Left cardiac atrium (tissue), 4 donors: ENCODE measurements at regions of chr20 and their contacts with region 1.

Region 1: DNA sequence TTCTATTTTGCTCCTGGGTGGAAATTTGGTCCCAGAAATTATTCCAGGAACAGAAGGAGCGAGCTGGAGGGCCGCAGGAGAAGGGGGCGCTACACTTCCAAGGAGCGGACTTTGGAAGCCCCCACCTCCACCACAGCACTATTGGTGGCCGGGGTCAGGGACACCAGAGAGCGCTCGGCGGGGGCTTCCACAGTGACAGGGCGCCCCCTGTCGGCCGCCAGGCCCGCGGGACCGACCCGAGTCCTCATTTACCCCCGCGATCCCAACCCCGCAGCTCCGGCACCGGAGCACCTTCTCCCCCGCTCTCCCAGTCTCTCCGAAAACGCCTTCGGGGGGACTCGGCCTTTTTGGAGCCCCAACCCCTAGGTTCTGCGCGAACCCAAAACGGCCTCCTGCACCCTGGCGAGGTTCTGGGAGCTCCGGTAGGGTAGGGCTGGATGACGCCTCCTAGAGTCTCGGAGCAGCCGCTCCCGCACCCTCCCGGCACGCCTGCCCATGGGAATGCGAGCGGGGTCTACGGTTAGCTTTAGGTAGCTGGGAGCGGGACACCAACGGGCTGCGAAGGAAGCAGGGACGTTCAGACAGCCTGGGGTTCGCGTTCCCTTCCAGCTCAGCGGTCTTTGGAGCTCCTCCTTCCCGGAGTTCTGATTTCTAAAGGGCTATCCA is 2.4 kb upstream of the FOXA2 start:
- DNase-seq: no peak
- ATAC-seq: peak in 1 of 2 donors; percentile 59

Region 2: DNA sequence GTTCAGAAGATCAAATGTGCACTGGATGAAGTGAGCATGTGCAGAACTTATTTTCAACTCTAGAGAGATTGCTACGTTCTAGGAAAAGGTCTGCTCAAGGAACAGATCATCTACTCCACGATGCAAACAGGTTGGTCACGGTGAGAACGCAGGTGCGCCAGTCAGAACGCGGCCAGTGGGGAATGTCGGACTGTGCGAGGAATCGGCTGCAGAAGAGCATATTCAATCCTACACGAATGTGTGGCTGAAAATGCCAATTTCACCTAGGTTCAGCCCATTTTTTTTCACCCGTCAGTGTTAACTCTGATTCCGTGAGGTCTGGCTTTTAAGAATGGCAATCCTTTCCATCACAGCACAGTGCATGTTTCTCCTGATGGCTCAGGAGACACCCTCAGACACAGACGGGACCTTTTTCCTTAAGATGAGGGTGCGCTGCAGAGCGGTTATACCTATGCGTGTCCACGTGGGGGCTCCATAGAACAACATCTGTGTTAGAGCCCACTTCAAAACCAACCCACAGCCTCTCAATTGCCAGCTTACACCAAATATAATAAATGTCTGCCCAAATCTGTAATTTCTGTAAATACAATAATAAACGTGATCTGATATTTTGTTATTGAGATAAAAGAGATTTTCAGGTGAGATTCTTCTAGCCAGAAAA is 252.8 kb before region 1 on chr20:
- intact Hi-C with region 1: loop called in 1 of 2 experiments (anchors 10 kb)
- DNase-seq: peak; percentile 43
- ATAC-seq: peak; percentile 41 to 80